Posterior vena cava (tissue), 2 donors: ENCODE measurements at regions of chr10 and their contacts with region 1.

Region 1: DNA sequence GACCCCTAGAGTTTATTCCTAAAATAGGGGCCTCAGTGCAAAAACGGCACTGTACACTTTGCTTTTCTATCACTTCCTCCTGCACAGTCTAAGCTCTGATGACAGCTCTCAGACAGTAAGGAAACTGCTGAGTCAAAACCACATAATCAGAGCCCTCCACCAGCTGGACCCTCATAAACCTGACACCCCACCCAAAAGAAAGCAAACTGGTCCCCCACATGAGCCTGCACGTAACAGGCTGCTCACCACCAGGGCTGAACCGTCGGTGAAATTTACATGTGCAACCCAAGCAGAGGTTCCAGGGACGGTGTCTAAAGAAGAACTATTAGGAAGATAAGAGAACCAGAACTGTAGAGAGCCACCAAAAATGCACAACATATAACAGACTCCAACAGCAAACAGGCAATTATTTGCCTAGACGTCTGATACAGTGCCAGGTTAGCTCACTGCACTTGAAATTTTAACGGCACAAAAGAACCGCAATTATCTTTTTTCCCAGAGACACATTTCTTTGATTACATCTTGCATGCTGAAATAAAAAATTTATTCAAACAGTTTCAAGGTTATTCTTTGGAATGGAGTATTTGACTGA is 19.6 kb downstream of the SGMS1 start:
- DNase-seq: no peak

Region 2: GRCh38 chr10:50552771-50553535 is 51.2 kb before region 1 on chr10:
- intact Hi-C with region 1: loop called in 1 of 2 experiments (anchors 1 kb)
- DNase-seq: no peak

Region 3: DNA sequence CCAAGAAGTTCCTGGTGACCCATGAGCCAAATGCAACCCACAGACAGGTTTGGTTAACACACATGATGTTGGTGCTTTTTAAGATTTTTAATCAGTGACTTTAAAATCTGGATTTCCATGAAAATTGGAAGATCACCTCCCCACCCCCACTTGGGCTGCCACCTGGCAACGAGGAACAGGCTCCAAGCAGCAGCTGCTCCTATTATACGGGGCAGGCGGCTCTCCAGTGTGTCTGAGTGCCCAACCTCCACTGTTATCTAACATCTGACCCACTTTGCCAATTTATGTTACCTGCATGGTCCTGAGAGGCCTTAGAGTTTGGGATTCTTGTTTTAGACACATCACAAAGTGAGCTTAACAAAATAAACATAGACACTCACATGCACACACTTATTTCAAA is 36.8 kb before region 1 on chr10:
- intact Hi-C with region 1: loop called in 1 of 2 experiments (anchors 5 kb)
- DNase-seq: no peak